ENCODE measurements at regions of chrX and their contacts with region 1.

Region 1: DNA sequence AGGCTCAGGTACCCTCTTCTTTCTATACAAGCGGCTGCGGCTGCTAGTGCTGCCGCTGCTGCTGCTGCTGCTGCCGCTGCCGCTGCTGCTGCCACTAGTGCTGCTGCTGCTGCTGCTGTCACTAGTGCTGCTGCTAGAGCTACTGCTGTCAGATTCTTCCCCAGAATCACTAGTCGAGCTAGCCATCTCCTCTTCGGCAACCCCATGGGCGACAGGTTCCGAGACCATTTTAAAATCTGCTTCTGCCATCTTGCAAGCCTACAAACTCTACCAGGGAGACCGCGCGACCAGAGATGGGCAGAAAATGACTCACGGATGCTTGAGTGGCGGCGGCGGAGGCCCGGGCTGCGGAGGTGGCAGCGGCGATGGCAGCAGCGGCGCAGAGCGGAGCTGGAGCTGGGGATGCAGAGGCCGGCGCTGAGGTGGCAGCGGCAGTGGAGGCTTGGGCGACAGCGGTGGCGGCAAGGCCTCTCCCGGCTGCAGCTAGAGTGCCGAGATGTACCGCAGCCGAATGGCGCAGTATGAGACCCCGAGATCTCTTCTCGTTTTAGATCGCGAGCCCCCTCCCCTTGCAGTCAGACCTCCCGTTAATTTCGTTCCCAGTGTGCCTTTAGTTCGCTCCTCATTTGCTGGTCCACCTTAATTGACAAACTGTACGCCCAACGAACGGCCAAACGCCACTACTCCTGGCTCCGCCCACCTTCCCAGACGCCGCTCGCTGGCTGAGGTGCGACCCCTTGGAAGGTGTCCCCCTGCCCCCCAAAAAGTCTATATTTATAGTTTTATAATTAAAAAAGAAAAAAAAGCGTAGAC is at the start of gene NAP1L3:
- DNase-seq: peak; percentile 44
- ATAC-seq: peak; percentile 86
- H3K4me3 ChIP-seq: peak within 1 kb of the TSS; percentile 76
- H3K27ac ChIP-seq: no peak within 1 kb of the TSS
- H3K4me1 ChIP-seq: no peaks in the 10 kb centered on the region
- H3K27me3 ChIP-seq: no peaks in the 10 kb centered on the region
- CTCF ChIP-seq: no peak
- total RNA-seq, gene NAP1L3: 1.5 and 1.9 TPM in 2 replicates

Region 2: GRCh38 chrX:93585661-93586060 is 87.6 kb before region 1 on chrX:
- CTCF ChIA-PET with region 1: no interaction called
- POLR2A ChIA-PET with region 1: no interaction called
- intact Hi-C with region 1: loop called (anchors 10 kb)
- DNase-seq: peak; percentile 79
- ATAC-seq: peak; percentile 89
- H3K4me3 ChIP-seq: no peak overlapping the region
- H3K27ac ChIP-seq: no peak overlapping the region
- H3K4me1 ChIP-seq: peaks cover 7% of the 10 kb centered on the region
- H3K27me3 ChIP-seq: no peaks in the 10 kb centered on the region
- CTCF ChIP-seq: no peak

Region 3: GRCh38 chrX:93703701-93704100 is 30.4 kb after region 1 on chrX:
- CTCF ChIA-PET with region 1: no interaction called
- POLR2A ChIA-PET with region 1: no interaction called
- intact Hi-C with region 1: no loop called
- DNase-seq: no peak
- ATAC-seq: no peak
- H3K4me3 ChIP-seq: no peak overlapping the region
- H3K27ac ChIP-seq: no peak overlapping the region
- H3K4me1 ChIP-seq: no peaks in the 10 kb centered on the region
- H3K27me3 ChIP-seq: no peaks in the 10 kb centered on the region
- CTCF ChIP-seq: no peak